Activated T-helper 1 cell treated with anti-CD3 and anti-CD28 coated beads, Interleukin-12 subunit alpha, Interleukin-12 subunit beta, Interleukin-2, Interleukin-4 antibody, amounts not matched to agents 30 ng/mL and 10 ng/mL and 1 ng/mL, durations not matched to agents 14 hours and 24 hours and 36 hours (primary cell): ENCODE measurements at regions of chr2 and their contacts with region 1.

Region 1: DNA sequence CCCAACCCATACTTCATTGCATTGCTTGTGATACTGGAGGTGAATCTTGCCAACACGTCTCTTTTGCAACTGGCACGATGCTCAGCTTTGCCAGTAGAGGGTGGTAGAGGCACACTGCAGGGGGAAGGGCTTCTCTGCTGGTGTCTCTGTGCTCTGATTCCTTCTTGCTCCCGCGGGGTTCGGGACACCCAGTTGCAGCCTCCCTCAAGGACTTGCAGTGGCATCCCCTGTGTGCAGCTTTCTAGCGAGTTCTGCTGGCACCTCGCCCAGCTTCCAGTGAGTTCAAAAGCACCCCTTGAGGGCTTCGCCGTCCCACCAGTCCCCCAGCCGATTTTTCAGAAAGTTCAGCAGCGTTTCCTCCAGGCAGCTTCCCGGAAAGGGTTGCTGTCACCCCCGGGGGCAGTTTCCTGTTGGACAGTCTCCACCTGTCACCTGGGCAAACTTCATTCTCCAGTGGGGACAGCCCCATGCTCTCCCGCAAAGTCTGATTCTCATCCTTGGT is 35.3 kb upstream of the EN1 start:
- DNase-seq: peak; percentile 30
- H3K4me3 Mint-ChIP-seq: peak overlapping the region; percentile 61
- H3K27ac Mint-ChIP-seq: no peak overlapping the region
- H3K4me1 Mint-ChIP-seq: peaks cover 17% of the 10 kb centered on the region
- H3K27me3 Mint-ChIP-seq: peaks cover 5% of the 10 kb centered on the region

Region 2: GRCh38 chr2:118893100-118893499 is 10.3 kb after region 1 on chr2:
- intact Hi-C with region 1: no loop called
- DNase-seq: no peak
- H3K4me3 Mint-ChIP-seq: no peak overlapping the region
- H3K27ac Mint-ChIP-seq: no peak overlapping the region
- H3K4me1 Mint-ChIP-seq: no peaks in the 10 kb centered on the region
- H3K27me3 Mint-ChIP-seq: no peaks in the 10 kb centered on the region

Region 3: DNA sequence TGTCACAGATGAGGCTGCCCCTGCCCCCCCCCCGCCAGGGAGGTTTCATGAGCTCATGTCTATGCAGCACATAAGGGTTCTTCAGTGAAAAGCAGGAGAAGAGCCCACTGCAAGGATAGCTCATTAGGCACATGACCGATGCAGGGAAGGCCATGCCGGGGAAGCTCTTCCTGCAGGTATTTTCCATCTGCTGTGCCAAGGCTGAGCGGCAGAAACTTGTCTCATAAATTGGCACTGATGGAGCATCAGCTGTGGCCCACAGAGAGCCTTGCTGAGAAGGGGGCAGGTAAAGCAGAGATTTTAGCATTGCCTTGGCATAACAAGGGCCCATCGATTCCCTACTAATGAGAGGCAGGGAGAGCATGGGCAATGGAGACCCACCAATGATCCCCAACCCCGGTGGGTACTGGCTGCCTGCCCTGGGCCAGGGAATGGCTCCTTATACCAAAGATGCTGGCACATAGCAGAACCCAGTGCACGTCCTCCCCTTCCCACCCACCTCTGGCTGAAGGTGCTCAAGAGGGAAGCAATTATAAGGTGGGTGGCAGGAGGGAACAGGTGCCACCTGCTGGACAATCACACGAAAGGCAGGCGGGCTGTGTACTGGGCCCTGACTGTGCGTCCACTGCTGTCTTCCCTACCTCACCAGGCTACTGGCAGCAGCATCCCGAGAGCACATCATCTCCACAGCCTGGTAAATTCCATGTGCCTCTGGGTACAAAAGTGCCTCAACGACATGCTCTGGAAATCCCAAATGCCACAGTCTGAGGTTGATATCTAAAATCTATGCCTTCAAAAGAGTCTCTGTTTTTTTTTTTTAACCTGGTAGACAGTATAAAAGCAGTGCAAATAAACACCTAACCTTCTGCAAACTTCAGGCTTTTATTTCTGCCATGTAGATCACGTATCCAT is 382.3 kb after region 1 on chr2:
- intact Hi-C with region 1: loop called (anchors 10 kb)
- DNase-seq: peak; percentile 4
- H3K4me3 Mint-ChIP-seq: no peak overlapping the region
- H3K27ac Mint-ChIP-seq: no peak overlapping the region
- H3K4me1 Mint-ChIP-seq: no peaks in the 10 kb centered on the region
- H3K27me3 Mint-ChIP-seq: peaks cover 8% of the 10 kb centered on the region

Region 4: GRCh38 chr2:119290859-119291587 is 408.3 kb after region 1 on chr2:
- intact Hi-C with region 1: loop called (anchors 1 kb)
- DNase-seq: peak; percentile 27
- H3K4me3 Mint-ChIP-seq: no peak overlapping the region
- H3K27ac Mint-ChIP-seq: no peak overlapping the region
- H3K4me1 Mint-ChIP-seq: no peaks in the 10 kb centered on the region
- H3K27me3 Mint-ChIP-seq: no peaks in the 10 kb centered on the region

Region 5: GRCh38 chr2:119476301-119477021 is 593.7 kb after region 1 on chr2:
- intact Hi-C with region 1: loop called (anchors 1 kb)
- DNase-seq: peak; percentile 9
- H3K4me3 Mint-ChIP-seq: no peak overlapping the region
- H3K27ac Mint-ChIP-seq: no peak overlapping the region
- H3K4me1 Mint-ChIP-seq: no peaks in the 10 kb centered on the region
- H3K27me3 Mint-ChIP-seq: no peaks in the 10 kb centered on the region